GM12878 (cell line): ENCODE measurements at regions of chr3 and their contacts with region 1.

Region 1: GRCh38 chr3:72665701-72666443 is 182.4 kb downstream of the SHQ1 start:
- DNase-seq: no peak
- ATAC-seq: peak; percentile 89
- H3K4me3 ChIP-seq: no peak overlapping the region
- H3K27ac ChIP-seq: no peak overlapping the region
- H3K4me1 ChIP-seq: no peaks in the 10 kb centered on the region
- H3K27me3 ChIP-seq: no peaks in the 10 kb centered on the region
- CTCF ChIP-seq: peak; percentile 56 to 68 (median 57); a peak in 5 of 6 replicates
- EP300 ChIP-seq: no peak
- POLR2A ChIP-seq: no peak
- RAD21 ChIP-seq: peak; percentile 84

Region 2: DNA sequence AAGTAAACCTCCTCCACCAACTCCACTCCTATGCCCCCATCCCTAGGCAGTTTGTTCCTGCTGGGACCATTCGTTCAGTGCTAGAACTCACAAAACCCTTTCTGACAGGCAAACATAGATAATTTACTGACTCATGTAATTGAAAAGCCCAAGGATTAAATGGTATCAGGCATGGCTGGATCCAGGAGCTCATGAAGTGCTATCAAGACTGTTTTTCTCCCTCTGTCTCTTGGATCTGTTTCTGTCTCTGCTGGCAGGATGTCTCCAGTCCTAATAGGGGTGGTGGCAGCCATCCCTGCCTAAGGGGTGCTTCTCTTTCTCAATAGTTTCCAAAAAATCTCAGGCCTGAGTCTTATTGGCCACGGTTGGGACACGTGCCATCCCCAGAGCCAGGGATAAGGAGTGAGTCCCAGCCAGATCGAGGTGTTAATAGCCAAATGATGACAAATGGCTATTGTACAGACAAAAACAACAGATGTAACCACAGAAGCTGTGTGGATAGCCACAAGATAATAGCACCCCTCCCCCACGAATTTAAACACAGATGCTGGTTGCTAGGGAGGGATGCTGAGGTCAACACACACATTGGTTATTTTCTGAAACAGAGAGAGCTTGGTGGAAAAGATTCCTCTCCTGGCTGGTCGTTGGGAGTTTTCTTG is 13.8 kb after region 1 on chr3:
- CTCF ChIA-PET with region 1: interaction called, 27 read pairs
- POLR2A ChIA-PET with region 1: no interaction called
- RAD21 ChIA-PET with region 1: interaction called, 7 read pairs
- SMC1A ChIA-PET with region 1: interaction called, 16 read pairs
- in situ Hi-C with region 1: no loop called
- intact Hi-C with region 1: no loop called
- DNase-seq: no peak
- ATAC-seq: peak; percentile 32
- H3K4me3 ChIP-seq: no peak overlapping the region
- H3K27ac ChIP-seq: no peak overlapping the region
- H3K4me1 ChIP-seq: peaks cover 39% of the 10 kb centered on the region
- H3K27me3 ChIP-seq: no peaks in the 10 kb centered on the region
- CTCF ChIP-seq: no peak
- EP300 ChIP-seq: peak; percentile 20 to 49; a peak in 2 of 4 replicates
- POLR2A ChIP-seq: no peak
- RAD21 ChIP-seq: no peak

Region 3: GRCh38 chr3:72722930-72723726 is 57.3 kb after region 1 on chr3:
- CTCF ChIA-PET with region 1: interaction called, 12 read pairs
- POLR2A ChIA-PET with region 1: no interaction called
- RAD21 ChIA-PET with region 1: no interaction called
- SMC1A ChIA-PET with region 1: no interaction called
- in situ Hi-C with region 1: no loop called
- intact Hi-C with region 1: no loop called
- DNase-seq: peak; percentile 35
- ATAC-seq: peak; percentile 97
- H3K4me3 ChIP-seq: no peak overlapping the region
- H3K27ac ChIP-seq: no peak overlapping the region; the same call in 1 of the 2 replicates
- H3K4me1 ChIP-seq: peaks cover 8% of the 10 kb centered on the region; the same call in 1 of the 2 replicates
- H3K27me3 ChIP-seq: no peaks in the 10 kb centered on the region
- CTCF ChIP-seq: no peak
- EP300 ChIP-seq: peak; percentile 67 to 76
- POLR2A ChIP-seq: no peak
- RAD21 ChIP-seq: no peak

Region 4: DNA sequence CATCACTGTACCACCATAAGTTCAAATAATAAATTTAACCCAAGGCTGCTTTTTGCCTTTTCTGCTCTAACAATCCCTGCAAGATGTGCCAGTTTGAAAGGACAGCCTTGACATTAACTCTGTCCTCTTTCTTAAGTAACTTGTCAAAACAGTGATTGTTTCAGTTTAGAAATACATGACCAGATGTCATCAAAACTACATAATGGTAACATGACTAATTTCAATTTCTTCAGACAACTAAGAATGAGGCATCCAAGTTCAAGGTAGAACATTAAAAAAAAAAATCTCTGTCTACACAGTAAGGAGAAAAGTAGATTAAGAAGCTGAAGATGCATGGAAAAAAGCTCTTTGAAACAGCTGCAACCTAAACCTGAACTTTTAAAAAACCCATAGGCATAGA is 135.0 kb after region 1 on chr3:
- CTCF ChIA-PET with region 1: interaction called, 10 read pairs
- POLR2A ChIA-PET with region 1: no interaction called
- RAD21 ChIA-PET with region 1: no interaction called
- SMC1A ChIA-PET with region 1: interaction called, 10 read pairs
- in situ Hi-C with region 1: no loop called
- intact Hi-C with region 1: no loop called
- DNase-seq: no peak
- ATAC-seq: peak; percentile 36
- H3K4me3 ChIP-seq: no peak overlapping the region
- H3K27ac ChIP-seq: no peak overlapping the region
- H3K4me1 ChIP-seq: peaks cover 4% of the 10 kb centered on the region; the same call in 1 of the 2 replicates
- H3K27me3 ChIP-seq: no peaks in the 10 kb centered on the region
- CTCF ChIP-seq: no peak
- EP300 ChIP-seq: no peak
- POLR2A ChIP-seq: no peak
- RAD21 ChIP-seq: no peak

Region 5: GRCh38 chr3:72811551-72811950 is 145.7 kb after region 1 on chr3:
- CTCF ChIA-PET with region 1: interaction called, 32 read pairs
- POLR2A ChIA-PET with region 1: no interaction called
- RAD21 ChIA-PET with region 1: interaction called, 22 read pairs
- SMC1A ChIA-PET with region 1: interaction called, 55 read pairs
- in situ Hi-C with region 1: no loop called
- intact Hi-C with region 1: no loop called
- DNase-seq: no peak
- ATAC-seq: no peak
- H3K4me3 ChIP-seq: no peak overlapping the region
- H3K27ac ChIP-seq: no peak overlapping the region
- H3K4me1 ChIP-seq: peaks cover 7% of the 10 kb centered on the region; the same call in 1 of the 2 replicates
- H3K27me3 ChIP-seq: no peaks in the 10 kb centered on the region
- CTCF ChIP-seq: no peak
- EP300 ChIP-seq: no peak
- POLR2A ChIP-seq: no peak
- RAD21 ChIP-seq: no peak

Region 6: DNA sequence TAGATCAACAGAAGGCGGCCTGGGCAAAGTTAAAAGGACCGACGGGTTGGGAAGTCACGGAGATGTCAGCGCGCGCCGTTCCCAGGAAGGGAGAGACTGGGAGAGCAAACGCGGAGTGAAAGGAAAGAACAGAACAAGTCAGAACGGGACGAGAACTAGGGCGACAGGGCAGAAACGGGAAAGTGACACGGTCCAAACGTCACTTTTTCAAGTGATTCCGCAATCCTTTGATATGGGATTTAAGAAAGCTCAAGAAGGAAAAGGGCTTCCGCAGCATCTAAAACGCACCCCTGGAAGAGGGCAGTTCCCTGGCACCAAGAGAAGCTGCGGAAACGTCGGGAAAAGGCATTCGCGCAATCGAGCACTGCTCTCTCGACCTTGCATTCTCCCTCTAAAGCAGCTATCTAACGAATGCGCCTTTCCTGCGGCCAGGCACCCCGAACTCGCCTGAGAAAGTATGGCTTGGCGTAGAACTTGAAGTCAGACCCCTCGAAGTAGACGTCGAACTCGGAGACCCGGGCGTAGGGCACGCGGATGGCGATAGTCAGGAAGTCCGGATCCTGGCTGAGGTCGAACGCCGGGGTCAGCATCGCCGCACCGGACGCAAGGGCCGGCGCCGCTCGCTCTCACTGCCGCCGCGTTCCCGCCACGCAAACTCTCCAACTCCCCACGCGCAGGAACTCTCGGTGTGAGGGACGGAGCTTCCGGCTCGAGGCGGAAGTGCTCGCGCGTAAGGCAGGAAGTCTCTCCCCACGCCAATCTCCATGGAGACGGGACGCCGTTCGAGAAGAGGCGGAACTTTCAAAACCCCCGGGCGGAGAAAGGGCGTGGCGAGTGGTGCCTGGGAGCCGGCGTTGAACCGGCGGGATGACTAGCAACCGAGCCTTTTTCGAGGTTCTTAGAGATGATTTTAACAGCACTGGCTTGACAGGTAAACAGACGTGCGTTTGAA is 182.2 kb after region 1 on chr3 and contains the start of gene SHQ1:
- CTCF ChIA-PET with region 1: interaction called, 9 read pairs
- POLR2A ChIA-PET with region 1: no interaction called
- RAD21 ChIA-PET with region 1: interaction called, 12 read pairs
- SMC1A ChIA-PET with region 1: interaction called, 18 read pairs
- in situ Hi-C with region 1: no loop called
- intact Hi-C with region 1: no loop called
- DNase-seq: peak; percentile 81
- ATAC-seq: peak; percentile 88
- H3K4me3 ChIP-seq: peak within 1 kb of the TSS; percentile 97
- H3K27ac ChIP-seq: peak within 1 kb of the TSS; percentile 79
- H3K4me1 ChIP-seq: peaks cover 35% of the 10 kb centered on the region
- H3K27me3 ChIP-seq: no peaks in the 10 kb centered on the region
- CTCF ChIP-seq: no peak
- EP300 ChIP-seq: no peak
- POLR2A ChIP-seq: peak; percentile 88
- RAD21 ChIP-seq: no peak
- polyA plus RNA-seq, gene SHQ1: 12.6 to 12.8 TPM

Region 7: GRCh38 chr3:73086071-73086494 is 420.2 kb after region 1 on chr3:
- CTCF ChIA-PET with region 1: interaction called, 15 read pairs
- POLR2A ChIA-PET with region 1: no interaction called
- RAD21 ChIA-PET with region 1: interaction called, 7 read pairs
- SMC1A ChIA-PET with region 1: interaction called, 8 read pairs
- in situ Hi-C with region 1: loop called (anchors 10 kb)
- intact Hi-C with region 1: loop called (anchors 2 kb)
- DNase-seq: no peak
- ATAC-seq: peak; percentile 76
- H3K4me3 ChIP-seq: no peak overlapping the region
- H3K27ac ChIP-seq: no peak overlapping the region
- H3K4me1 ChIP-seq: no peaks in the 10 kb centered on the region
- H3K27me3 ChIP-seq: no peaks in the 10 kb centered on the region
- CTCF ChIP-seq: peak; percentile 67 to 89 (median 72)
- EP300 ChIP-seq: no peak
- POLR2A ChIP-seq: no peak
- RAD21 ChIP-seq: peak; percentile 98